ENCODE measurements at regions of chr1 and their contacts with region 1.

Region 1: DNA sequence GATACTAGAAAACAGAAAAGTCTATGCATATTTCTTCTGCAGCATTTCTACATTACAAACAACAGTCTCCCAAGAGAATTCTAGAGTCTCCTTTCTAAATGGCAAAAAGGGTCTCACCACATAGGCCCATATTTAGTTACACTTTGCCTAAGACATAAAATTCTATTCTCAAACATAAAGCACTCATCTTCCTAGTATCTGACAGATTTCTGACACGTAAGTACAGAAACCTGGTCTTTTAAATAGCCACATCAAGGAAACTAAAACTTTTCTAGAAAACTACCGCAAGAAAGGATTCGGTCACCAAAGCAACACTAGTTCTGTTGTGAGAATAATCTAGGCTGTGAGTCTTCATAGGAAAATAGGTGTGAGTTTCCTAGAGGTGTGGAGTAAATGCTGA is 33.6 kb upstream of the CTSK start:
- DNase-seq: peak; percentile 18
- H3K4me3 Mint-ChIP-seq: peak overlapping the region; percentile 32
- H3K27ac Mint-ChIP-seq: peak overlapping the region; percentile 49
- H3K4me1 Mint-ChIP-seq: peaks cover 31% of the 10 kb centered on the region
- H3K27me3 Mint-ChIP-seq: no peaks in the 10 kb centered on the region

Region 2: GRCh38 chr1:150765296-150765976 is 76.2 kb before region 1 on chr1 and contains the start of gene CTSS:
- intact Hi-C with region 1: loop called (anchors 5 kb)
- DNase-seq: no peak
- H3K4me3 Mint-ChIP-seq: peak within 1 kb of the TSS; percentile 92
- H3K27ac Mint-ChIP-seq: peak within 1 kb of the TSS; percentile 94
- H3K4me1 Mint-ChIP-seq: peaks cover 40% of the 10 kb centered on the region
- H3K27me3 Mint-ChIP-seq: peaks cover 13% of the 10 kb centered on the region
- total RNA-seq, gene CTSS: 31.7 and 34.2 TPM in 2 replicates

Region 3: DNA sequence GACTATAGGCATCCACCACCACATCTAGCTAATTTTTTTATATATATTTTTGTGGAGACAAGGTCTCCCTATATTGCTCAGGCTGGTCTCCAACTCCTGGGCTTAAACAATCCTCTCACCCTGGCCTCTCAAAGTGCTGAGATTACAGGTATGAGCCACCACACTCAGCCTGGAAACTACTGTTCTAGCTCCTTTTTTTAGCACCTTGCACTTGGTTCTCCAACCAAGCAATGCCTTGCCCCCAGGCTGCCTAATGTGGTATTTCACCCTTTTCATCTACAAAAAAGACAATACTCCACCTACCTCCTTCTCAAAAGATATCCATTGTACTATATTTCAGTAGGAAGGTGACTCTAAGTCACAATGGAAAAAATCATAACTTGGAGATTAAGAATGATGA is 28.1 kb after region 1 on chr1:
- intact Hi-C with region 1: no loop called
- DNase-seq: no peak
- H3K4me3 Mint-ChIP-seq: no peak overlapping the region
- H3K27ac Mint-ChIP-seq: no peak overlapping the region
- H3K4me1 Mint-ChIP-seq: peaks cover 25% of the 10 kb centered on the region
- H3K27me3 Mint-ChIP-seq: no peaks in the 10 kb centered on the region

Region 4: DNA sequence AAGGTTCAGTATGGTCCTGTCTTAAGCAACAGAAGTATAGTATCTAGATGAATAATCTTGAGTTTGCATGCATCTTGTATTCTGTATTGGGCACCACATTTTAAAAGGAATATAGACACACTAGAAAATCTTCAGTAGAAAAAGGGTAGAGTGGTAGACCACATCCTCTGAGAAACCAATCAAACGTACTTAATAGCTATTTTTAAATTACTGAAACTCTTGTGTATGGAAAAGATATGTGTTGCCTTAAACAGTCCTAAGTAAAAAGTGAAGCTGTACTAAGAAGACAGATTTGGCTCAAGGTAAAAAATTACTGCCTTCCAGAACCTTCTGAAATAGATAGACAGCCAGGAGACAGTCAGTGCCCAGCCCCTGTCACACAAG is 48.4 kb after region 1 on chr1:
- intact Hi-C with region 1: loop called (anchors 2 kb)
- DNase-seq: no peak
- H3K4me3 Mint-ChIP-seq: peak overlapping the region; percentile 48
- H3K27ac Mint-ChIP-seq: peak overlapping the region; percentile 86
- H3K4me1 Mint-ChIP-seq: peaks cover 20% of the 10 kb centered on the region
- H3K27me3 Mint-ChIP-seq: peaks cover 2% of the 10 kb centered on the region

Region 5: DNA sequence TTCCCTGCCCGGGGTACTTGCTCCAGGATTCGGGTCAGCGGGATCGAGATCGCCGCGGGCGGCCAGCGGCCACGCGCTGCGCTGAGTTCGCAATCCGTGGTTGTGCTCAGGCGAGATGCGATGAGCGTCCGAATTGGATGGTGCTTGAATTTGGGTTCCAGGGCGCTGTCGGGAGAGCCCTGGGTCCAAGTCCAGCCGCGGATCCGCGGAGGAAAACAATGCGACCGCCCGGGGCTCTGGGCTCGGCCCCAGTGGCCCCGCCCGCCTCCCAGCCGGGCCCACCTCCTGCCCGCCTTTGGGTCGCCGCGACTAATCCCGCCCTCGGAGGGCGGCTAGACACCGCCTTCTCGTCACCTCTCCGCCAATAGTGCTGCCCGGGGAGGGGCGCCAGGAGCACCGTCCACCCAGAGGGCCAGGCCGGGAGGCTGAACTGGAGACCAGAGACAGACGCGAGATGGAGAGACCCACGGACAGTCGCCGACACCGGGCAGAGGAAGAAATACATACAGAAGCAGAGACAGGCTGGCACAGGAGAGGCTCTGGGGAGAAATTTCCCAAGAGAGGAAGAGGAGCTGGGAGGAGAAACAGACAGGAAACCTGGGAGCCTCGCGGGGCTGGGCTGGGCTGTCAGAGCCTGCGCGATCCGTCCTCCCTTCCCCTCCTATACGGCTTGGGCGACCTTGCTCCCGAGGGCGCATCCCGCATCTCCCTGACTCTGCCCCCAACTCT is 304.9 kb after region 1 on chr1 and contains the start of gene SEMA6C:
- intact Hi-C with region 1: no loop called
- DNase-seq: peak; percentile 91
- H3K4me3 Mint-ChIP-seq: peak within 1 kb of the TSS; percentile 97
- H3K27ac Mint-ChIP-seq: peak within 1 kb of the TSS; percentile 57
- H3K4me1 Mint-ChIP-seq: peaks cover 22% of the 10 kb centered on the region
- H3K27me3 Mint-ChIP-seq: peaks cover 20% of the 10 kb centered on the region
- total RNA-seq, gene SEMA6C: 3.6 and 4.3 TPM in 2 replicates

Measured in activated T-helper 1 cell treated with anti-CD3 and anti-CD28 coated beads, Interleukin-12 subunit alpha, Interleukin-12 subunit beta, Interleukin-2, Interleukin-4 antibody, amounts not matched to agents 30 ng/mL and 10 ng/mL and 1 ng/mL, durations not matched to agents 14 hours and 24 hours and 36 hours (primary cell).